ENCODE measurements at regions of chr6 and their contacts with region 1.

Region 1: DNA sequence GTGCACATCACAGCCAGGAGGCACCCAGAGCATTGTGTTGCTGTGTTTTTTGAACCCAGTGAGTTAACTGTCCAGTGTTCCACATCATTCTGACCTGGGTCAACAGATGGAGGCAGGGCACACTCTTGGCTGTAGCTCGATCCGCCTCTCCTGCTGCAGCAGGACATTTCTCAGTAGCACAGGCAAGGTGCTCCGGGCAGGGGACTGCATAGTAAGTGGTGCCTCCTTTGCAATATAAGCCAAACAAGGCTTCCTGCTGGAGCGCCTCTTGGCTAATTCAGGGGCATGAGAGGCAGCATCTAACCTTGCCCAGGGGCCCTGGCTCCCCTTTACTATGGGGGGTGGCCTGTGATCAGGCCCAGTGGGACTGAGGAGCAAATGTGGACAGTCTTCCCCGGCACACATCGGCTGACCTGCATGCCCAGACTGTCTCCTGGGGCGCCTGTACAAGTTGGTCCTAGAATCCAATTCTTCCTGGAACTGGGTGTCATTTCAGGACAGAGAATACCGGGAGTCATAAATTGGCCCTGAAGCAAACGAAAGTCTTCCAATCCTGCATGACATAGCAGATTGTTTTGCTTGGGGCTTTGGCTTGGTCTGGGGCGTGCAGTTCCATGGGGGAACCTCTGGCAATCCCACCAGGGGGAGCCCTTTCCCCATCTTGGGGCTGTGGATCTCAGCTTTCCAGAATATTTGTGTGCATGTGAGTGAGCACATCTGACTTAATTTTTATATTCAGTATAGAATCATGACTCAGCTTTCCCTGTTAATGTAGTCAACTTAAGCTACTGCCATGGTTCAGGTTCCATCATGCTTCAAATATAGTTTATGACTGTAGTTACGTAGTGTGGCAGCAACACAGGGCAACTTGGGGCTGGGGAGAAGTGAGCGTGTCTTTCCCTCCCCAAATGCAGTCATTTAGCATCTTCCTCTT is 56.0 kb upstream of the DDR1 start:
- DNase-seq: peak; percentile 92
- ATAC-seq: peak; percentile 83
- H3K4me3 Mint-ChIP-seq: peak overlapping the region; percentile 66
- H3K27ac Mint-ChIP-seq: peak overlapping the region; percentile 97
- H3K4me1 Mint-ChIP-seq: peaks cover 65% of the 10 kb centered on the region
- H3K27me3 Mint-ChIP-seq: no peaks in the 10 kb centered on the region

Region 2: GRCh38 chr6:30776390-30777154 is 51.7 kb before region 1 on chr6:
- CTCF ChIA-PET with region 1: no interaction called
- POLR2A ChIA-PET with region 1: interaction called, 11 read pairs
- intact Hi-C with region 1: no loop called
- DNase-seq: no peak
- ATAC-seq: no peak
- H3K4me3 Mint-ChIP-seq: no peak overlapping the region
- H3K27ac Mint-ChIP-seq: no peak overlapping the region
- H3K4me1 Mint-ChIP-seq: peaks cover 71% of the 10 kb centered on the region
- H3K27me3 Mint-ChIP-seq: no peaks in the 10 kb centered on the region

Region 3: DNA sequence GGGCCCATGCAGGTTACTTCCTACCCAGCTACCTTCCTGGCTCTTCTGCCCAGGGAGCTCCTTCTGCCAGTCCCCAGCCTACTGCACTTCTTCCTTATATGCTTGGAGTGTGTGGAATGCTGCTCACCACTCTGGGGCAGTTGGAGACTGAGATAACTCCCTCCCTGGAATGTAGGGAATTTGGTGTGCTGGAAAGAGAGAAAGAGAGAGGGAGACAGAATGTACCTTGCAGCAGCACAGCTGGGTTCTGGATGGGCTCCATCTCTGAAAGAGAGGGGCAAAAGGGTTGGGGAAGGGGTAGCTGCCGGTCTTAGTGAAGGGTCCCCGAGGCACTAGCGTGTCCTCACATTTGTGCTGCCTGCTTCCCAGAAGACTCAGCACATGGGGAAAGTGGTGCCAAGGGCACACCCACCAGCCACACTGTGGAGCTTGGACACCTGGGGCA is 15.8 kb after region 1 on chr6:
- CTCF ChIA-PET with region 1: interaction called, 17 read pairs
- POLR2A ChIA-PET with region 1: interaction called, 8 read pairs
- intact Hi-C with region 1: no loop called
- DNase-seq: no peak
- ATAC-seq: no peak
- H3K4me3 Mint-ChIP-seq: no peak overlapping the region
- H3K27ac Mint-ChIP-seq: no peak overlapping the region
- H3K4me1 Mint-ChIP-seq: peaks cover 8% of the 10 kb centered on the region
- H3K27me3 Mint-ChIP-seq: no peaks in the 10 kb centered on the region

Region 4: DNA sequence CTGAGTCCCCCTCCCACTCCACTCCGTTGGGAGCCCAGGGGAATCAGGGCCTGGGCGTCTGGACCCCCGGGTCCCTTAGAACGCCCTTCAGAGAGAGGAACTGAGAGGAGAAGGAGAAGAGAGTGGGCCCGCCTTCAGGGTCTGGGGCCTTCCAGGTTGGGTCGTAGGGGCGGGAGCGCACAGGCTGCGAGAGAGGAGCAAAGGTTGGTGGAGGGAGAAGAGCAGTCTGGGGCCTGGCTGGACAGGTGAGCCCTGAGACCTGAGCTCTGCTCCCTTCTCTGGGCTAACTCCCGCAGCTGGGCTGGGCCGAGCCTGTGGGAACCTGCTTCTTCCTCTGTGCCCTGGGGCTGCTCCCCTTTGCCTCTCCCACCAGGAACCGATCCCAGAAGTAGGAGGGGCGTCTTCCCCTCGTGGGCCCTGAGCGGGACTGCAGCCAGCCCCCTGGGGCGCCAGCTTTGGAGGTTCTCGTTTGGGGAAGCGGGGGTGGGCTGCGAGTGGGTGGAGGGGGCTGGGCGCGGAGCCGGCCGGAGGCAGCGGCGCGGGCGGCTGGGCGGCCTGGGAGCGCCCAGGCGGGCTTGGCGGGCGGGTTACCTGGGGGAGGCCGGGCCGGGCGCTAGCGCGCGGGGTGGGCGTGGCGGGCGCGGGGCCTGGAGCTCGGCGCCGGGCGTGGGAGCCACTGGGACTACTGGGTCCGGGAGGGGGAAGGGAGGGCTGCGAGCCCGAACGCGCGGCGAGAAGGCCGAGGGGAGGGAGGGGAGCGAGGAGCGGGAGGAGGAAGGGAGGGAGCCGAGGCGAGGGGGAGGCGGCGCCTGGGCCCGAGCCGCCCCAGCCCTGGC is 55.6 kb after region 1 on chr6 and contains the start of gene DDR1:
- CTCF ChIA-PET with region 1: interaction called, 4 read pairs
- POLR2A ChIA-PET with region 1: no interaction called
- intact Hi-C with region 1: loop called in 1 of 2 experiments (anchors 2 kb)
- DNase-seq: peak; percentile 67
- ATAC-seq: peak; percentile 68
- H3K4me3 Mint-ChIP-seq: peak within 1 kb of the TSS; percentile 71
- H3K27ac Mint-ChIP-seq: peak within 1 kb of the TSS; percentile 73
- H3K4me1 Mint-ChIP-seq: peaks cover 30% of the 10 kb centered on the region
- H3K27me3 Mint-ChIP-seq: no peaks in the 10 kb centered on the region
- total RNA-seq, gene DDR1: 9.5 to 12.6 TPM

Region 5: DNA sequence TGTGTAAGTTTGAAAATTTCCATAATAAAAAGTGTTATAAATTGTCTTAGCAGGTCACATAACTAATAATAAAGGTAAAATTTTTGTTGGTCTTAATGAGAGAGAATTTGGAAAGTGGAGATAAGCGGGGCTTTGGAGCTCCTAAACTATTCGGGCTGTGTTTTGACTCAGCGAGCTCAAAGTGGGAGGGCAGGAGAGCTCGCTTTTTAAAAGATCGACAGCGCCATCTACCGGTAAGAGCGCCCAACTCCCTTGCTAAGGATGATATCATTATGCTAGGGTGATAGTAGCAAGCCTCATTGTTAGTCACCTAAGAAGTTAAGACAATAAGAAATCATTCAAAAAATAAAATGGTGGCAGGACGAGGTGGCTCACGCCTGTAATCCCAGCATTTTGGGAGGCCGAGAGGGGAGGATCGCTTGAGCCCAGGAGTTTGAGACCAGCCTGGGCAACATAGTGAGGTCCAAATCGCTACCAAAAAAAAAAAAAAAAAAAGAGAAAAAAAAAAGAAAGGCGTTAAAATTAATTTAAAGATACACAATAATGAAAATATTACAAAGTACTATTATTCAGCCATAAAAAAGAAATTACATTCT is 259.3 kb after region 1 on chr6:
- CTCF ChIA-PET with region 1: interaction called, 24 read pairs
- POLR2A ChIA-PET with region 1: no interaction called
- intact Hi-C with region 1: loop called (anchors 1 to 2 kb)
- DNase-seq: peak; percentile 94
- ATAC-seq: peak; percentile 96
- H3K4me3 Mint-ChIP-seq: no peak overlapping the region
- H3K27ac Mint-ChIP-seq: no peak overlapping the region
- H3K4me1 Mint-ChIP-seq: peaks cover 13% of the 10 kb centered on the region
- H3K27me3 Mint-ChIP-seq: no peaks in the 10 kb centered on the region

Measured in activated CD4-positive, alpha-beta T cell treated with anti-CD3 and anti-CD28 coated beads for 36 hours (primary cell).